CD8-positive, alpha-beta T cell (primary cell): ENCODE measurements at regions of chr9 and their contacts with region 1.

Region 1: DNA sequence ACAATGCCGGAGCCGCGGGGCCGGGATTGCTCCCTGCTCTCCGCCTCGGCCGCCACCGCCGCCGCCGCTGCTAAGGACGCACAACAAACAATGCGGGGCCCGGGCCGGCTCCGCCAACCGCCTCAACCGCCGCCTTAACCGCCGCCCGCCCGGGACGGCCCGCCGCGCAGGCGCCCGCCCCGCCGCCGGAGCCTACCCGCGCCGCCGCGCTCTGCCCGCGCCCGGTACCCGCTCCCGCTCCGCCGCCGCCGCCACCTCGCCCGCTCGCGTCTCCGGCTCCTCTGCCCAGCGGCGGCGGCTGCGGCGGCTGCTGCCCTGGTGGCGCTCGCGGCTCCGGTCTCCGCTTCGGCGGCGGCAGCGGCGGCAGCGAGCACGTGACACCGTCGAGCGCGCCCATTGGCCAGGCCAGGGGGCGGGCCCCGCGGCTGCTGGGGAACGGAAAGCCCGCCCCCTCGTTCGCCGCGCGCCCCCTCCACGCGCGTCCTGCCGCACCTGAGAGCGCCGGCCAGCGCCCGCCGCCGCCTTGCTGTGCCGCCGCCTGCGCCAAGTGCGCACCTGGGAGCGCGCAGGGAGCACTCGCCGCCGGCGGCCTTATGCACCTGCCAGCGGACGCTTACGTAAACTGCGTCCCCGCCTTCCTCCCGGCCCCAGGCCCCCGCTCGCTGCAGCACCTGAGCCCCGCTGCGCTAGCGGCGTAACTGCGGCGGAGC is at the start of gene STRBP:
- DNase-seq: peak; percentile 87 to 96 (median 92)
- ATAC-seq: peak; percentile 89
- H3K4me3 ChIP-seq: peak within 1 kb of the TSS; percentile 72 to 88
- H3K4me3 Mint-ChIP-seq: peak within 1 kb of the TSS; percentile 79
- H3K27ac ChIP-seq: peak within 1 kb of the TSS; percentile 55 to 73
- H3K27ac Mint-ChIP-seq: peak within 1 kb of the TSS; percentile 67
- H3K4me1 ChIP-seq: peaks cover 19% of the 10 kb centered on the region
- H3K4me1 Mint-ChIP-seq: peaks cover 43% of the 10 kb centered on the region
- H3K27me3 ChIP-seq: no peaks in the 10 kb centered on the region
- H3K27me3 Mint-ChIP-seq: no peaks in the 10 kb centered on the region
- CTCF ChIP-seq: no peak
- total RNA-seq, gene STRBP: 10.2 to 12.6 TPM

Region 2: DNA sequence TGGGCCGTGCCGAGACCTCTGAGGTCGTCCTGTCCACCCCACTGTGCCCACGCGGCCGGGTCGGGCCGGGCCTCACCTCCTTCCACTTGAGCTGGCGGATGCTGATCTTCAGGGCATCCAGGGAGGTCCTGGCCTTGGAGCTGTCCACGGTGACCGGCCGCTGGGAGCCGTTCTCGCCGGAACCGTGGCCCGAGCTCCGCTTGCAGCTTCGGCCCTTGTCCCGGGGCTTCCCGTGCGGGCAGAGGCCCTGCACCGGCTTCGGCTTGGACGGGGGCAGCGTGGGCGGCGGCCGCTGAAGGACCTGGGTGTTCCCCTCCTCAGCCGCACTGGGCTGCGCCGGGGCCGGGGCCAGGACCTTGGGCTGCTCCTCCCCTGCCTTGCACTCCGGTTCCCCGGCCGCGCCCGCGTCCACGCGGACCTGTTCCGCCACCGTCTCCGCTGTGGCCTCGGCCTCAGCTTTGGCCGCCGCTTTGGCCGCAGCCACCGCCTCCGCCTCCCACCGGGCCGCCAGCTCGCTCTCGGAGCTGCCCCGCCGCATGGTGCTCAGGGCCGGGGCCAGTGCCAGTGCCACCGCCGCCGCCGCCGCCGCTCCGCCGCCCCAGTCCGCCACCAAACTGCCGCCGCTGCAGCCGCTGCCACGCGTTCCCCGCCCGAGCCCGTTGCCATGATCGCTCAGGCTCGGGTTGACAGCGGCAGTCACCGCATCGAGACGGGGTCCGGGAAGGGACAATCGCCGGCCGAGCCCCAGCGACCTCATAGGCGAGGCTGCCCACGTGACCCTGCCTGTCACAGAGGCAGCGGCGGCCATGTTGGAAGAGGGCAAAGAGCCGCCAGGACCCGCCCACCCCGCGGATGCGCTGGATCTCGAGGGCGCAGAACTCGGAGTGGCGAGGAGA is 1175.5 kb before region 1 on chr9 and contains the start of gene TTLL11:
- CTCF ChIA-PET with region 1: no interaction called
- POLR2A ChIA-PET with region 1: no interaction called
- intact Hi-C with region 1: loop called (anchors 10 kb)
- DNase-seq: peak; percentile 93 to 97 (median 97)
- ATAC-seq: peak; percentile 94
- H3K4me3 ChIP-seq: peak within 1 kb of the TSS; percentile 51 to 77
- H3K4me3 Mint-ChIP-seq: peak within 1 kb of the TSS; percentile 92
- H3K27ac ChIP-seq: peak within 1 kb of the TSS in 1 of 2 experiments; percentile 36
- H3K27ac Mint-ChIP-seq: peak within 1 kb of the TSS; percentile 58
- H3K4me1 ChIP-seq: peaks cover 24% of the 10 kb centered on the region
- H3K4me1 Mint-ChIP-seq: peaks cover 52% of the 10 kb centered on the region
- H3K27me3 ChIP-seq: no peaks in the 10 kb centered on the region
- H3K27me3 Mint-ChIP-seq: no peaks in the 10 kb centered on the region
- CTCF ChIP-seq: no peak
- total RNA-seq, gene TTLL11: 0.68 to 1.00 TPM

Region 3: GRCh38 chr9:122264360-122265148 is 1003.8 kb before region 1 on chr9 and contains the starts of genes MRRF and RBM18:
- CTCF ChIA-PET with region 1: no interaction called
- POLR2A ChIA-PET with region 1: no interaction called
- intact Hi-C with region 1: loop called (anchors 2 to 10 kb)
- DNase-seq: peak; percentile 80 to 95 (median 87)
- ATAC-seq: peak; percentile 84
- H3K4me3 ChIP-seq: peak within 1 kb of the TSS; percentile 79 to 91
- H3K4me3 Mint-ChIP-seq: peak within 1 kb of the TSS; percentile 95
- H3K27ac ChIP-seq: peak within 1 kb of the TSS; percentile 95 to 99
- H3K27ac Mint-ChIP-seq: peak within 1 kb of the TSS; percentile 98
- H3K4me1 ChIP-seq: peaks cover 38% of the 10 kb centered on the region
- H3K4me1 Mint-ChIP-seq: peaks cover 60% of the 10 kb centered on the region
- H3K27me3 ChIP-seq: no peaks in the 10 kb centered on the region
- H3K27me3 Mint-ChIP-seq: no peaks in the 10 kb centered on the region
- CTCF ChIP-seq: no peak
- total RNA-seq, gene MRRF: 22.9 to 23.2 TPM
- total RNA-seq, gene RBM18: 34.0 to 38.9 TPM

Region 4: GRCh38 chr9:122940603-122941559 is 327.5 kb before region 1 on chr9 and contains the start of gene RABGAP1:
- CTCF ChIA-PET with region 1: no interaction called
- POLR2A ChIA-PET with region 1: no interaction called
- intact Hi-C with region 1: loop called in 1 of 2 experiments (anchors 1 kb)
- DNase-seq: peak; percentile 95 to 99 (median 99)
- ATAC-seq: peak; percentile 98
- H3K4me3 ChIP-seq: peak within 1 kb of the TSS; percentile 79 to 98
- H3K4me3 Mint-ChIP-seq: peak within 1 kb of the TSS; percentile 97
- H3K27ac ChIP-seq: peak within 1 kb of the TSS; percentile 64 to 88
- H3K27ac Mint-ChIP-seq: peak within 1 kb of the TSS; percentile 92
- H3K4me1 ChIP-seq: peaks cover 18% of the 10 kb centered on the region
- H3K4me1 Mint-ChIP-seq: peaks cover 44% of the 10 kb centered on the region
- H3K27me3 ChIP-seq: no peaks in the 10 kb centered on the region
- H3K27me3 Mint-ChIP-seq: no peaks in the 10 kb centered on the region
- CTCF ChIP-seq: no peak
- total RNA-seq, gene RABGAP1: 20.2 to 21.0 TPM

Region 5: DNA sequence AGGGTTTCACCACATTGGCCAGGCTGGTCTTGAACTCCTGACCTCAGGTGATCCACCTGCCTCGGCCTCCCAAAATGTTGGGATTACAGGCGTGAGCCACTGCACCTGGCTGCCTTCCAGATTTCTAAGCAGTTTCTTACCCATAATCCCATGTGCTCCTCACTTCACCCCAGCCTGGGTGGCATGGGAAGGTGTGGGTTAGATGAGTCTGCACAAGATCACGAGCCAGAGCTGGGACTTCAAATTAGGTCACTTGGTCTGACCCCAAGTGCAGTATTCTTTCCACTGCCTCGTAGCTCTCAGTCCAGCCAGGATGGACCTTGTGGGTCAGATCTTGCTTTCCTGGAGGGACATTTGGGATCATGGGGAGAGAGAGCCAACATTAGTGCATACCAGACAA is 37.5 kb after region 1 on chr9:
- CTCF ChIA-PET with region 1: interaction called, 3 read pairs
- POLR2A ChIA-PET with region 1: interaction called, 3 read pairs
- intact Hi-C with region 1: loop called in 1 of 2 experiments (anchors 2 kb)
- DNase-seq: no peak
- ATAC-seq: no peak
- H3K4me3 ChIP-seq: no peak overlapping the region
- H3K4me3 Mint-ChIP-seq: no peak overlapping the region
- H3K27ac ChIP-seq: no peak overlapping the region
- H3K27ac Mint-ChIP-seq: peak overlapping the region; percentile 45
- H3K4me1 ChIP-seq: peaks cover 38% of the 10 kb centered on the region
- H3K4me1 Mint-ChIP-seq: peaks cover 42% of the 10 kb centered on the region
- H3K27me3 ChIP-seq: no peaks in the 10 kb centered on the region
- H3K27me3 Mint-ChIP-seq: no peaks in the 10 kb centered on the region
- CTCF ChIP-seq: no peak

Region 6: DNA sequence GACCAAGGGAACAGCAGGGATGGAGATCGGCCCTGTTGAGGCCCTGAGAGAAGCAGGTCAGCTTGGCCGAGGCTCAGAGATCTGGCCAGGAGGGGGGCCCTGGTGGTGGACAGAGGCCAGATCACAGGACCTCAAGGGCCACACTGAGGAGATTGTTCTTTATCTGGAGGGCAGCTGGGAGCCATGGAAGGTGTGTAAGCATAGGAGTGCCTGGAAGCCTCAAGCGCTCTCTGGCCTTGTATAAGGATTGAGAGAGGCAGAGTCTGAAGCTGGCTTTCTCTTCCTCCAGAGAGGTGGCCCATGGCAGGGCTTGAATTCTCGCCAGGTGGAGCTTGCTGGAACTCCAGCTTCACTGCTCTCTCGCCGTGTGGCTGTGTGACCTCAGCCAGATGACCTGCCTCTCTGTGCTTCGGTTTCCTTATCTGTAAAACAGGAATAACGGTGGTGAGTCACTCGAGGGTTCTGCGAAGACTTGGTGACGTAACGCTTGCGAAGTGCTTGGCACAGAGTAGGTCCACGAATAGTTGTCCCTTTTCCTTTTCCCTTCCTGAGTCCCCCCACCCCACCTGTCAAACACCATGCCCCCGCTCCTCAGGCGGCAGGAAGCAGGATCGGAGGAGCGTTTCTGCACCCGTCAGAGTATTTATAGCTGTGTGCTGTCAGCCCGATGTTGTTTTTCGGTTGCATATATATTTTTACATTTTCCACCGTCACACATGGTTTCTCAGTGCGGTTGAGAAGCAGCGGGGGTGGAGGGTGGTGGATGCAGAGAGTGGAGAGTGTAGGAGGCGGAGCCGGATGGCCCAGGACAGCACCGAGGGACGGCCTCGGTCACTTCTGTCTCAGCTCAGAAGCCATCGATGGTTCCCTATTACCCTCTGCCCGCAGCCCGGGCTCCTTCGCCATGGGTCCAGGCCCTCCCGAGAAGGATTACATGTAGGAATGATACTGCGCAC is 70.6 kb after region 1 on chr9:
- CTCF ChIA-PET with region 1: no interaction called
- POLR2A ChIA-PET with region 1: interaction called, 3 read pairs
- intact Hi-C with region 1: loop called (anchors 1 to 5 kb)
- DNase-seq: peak; percentile 8 to 76 (median 58)
- ATAC-seq: peak; percentile 72
- H3K4me3 ChIP-seq: peak overlapping the region; percentile 53 to 65
- H3K4me3 Mint-ChIP-seq: peak overlapping the region; percentile 89
- H3K27ac ChIP-seq: peak overlapping the region; percentile 10 to 46
- H3K27ac Mint-ChIP-seq: peak overlapping the region; percentile 91
- H3K4me1 ChIP-seq: peaks cover 25% of the 10 kb centered on the region
- H3K4me1 Mint-ChIP-seq: peaks cover 28% of the 10 kb centered on the region
- H3K27me3 ChIP-seq: no peaks in the 10 kb centered on the region
- H3K27me3 Mint-ChIP-seq: no peaks in the 10 kb centered on the region
- CTCF ChIP-seq: no peak